K562 (cell line): ENCODE measurements at regions of chr3 and their contacts with region 1.

Region 1: DNA sequence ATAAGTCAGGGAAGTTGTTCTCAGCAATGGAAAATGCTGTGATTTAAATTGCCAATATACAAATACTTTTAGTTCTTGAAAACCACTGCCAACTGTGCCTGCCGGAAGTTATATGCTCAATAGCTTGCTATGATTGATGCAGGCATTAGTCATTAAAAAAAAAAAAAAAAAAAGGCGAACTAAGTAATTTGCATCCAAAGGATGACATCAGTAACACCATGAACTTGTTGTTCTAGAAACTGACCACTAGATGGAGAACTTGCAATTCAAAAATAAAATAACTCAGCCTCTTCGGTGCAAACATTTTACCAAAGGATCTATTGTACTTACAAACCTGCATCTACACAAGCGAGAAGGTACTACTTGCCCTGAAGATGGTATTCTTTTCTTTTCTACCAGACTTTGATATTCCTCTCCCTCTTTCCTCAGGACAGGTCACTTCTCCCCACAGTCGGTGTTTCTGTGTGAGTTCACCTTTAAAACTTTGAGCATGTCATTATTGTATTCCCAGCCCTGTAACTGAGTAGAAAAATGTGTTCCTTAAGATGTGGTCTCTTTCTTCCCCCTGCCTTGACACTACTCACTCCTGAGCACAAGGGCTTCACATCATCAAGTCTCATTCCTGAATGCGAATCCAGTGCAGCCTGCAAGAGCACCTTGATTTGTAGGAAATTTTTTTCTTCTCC is 115.0 kb upstream of the VEPH1 start:
- DNase-seq: peak; percentile 57 to 70 (median 66)
- ATAC-seq: peak; percentile 78
- H3K4me3 ChIP-seq: no peak overlapping the region
- H3K27ac ChIP-seq: no peak overlapping the region
- H3K4me1 ChIP-seq: no peaks in the 10 kb centered on the region
- H3K27me3 ChIP-seq: peaks cover 0 to 6% of the 10 kb centered on the region in 2 experiments; a peak in 3 of 5 replicates
- CTCF ChIP-seq: peak; percentile 29 to 74 (median 60); a peak in 5 of 6 replicates
- EP300 ChIP-seq: no peak
- POLR2A ChIP-seq: no peak
- RAD21 ChIP-seq: peak; percentile 59 to 71

Region 2: DNA sequence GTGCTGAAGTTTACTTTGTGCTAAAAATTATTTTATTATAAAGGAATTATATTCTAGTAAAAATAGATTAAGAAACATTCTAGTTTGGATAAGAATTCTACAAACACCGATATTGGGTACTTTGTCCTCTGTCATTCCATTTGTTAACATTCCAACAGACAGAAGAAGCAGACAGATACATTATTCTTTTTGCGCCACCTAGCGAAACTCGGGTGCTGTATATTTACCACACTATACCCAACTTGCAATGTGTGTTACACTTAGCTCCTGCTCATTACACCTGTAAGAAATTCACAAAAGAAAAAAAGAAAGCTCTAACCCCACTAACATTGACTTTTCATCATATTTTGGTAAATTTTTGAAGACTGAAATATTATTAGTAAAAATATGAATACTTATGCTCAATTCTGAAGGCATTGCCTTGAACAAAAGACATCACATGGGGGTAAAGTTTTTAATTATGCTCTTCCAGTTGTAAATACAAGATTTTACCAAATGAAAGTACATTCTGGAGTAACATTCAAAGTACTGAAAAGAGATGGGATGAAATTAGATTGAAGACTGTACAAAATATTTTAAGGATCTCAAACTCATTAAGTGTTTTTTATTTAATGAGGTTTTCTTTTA is 816.3 kb after region 1 on chr3:
- CTCF ChIA-PET with region 1: interaction called, 6 read pairs
- POLR2A ChIA-PET with region 1: interaction called, 3 read pairs
- in situ Hi-C with region 1: no loop called
- intact Hi-C with region 1: loop called (anchors 5 kb)
- DNase-seq: peak; percentile 11 to 80 (median 24)
- ATAC-seq: peak; percentile 98
- H3K4me3 ChIP-seq: no peak overlapping the region
- H3K27ac ChIP-seq: no peak overlapping the region
- H3K4me1 ChIP-seq: no peaks in the 10 kb centered on the region
- H3K27me3 ChIP-seq: no peaks in the 10 kb centered on the region
- CTCF ChIP-seq: peak; percentile 55 to 85 (median 67)
- EP300 ChIP-seq: no peak
- POLR2A ChIP-seq: no peak
- RAD21 ChIP-seq: peak; percentile 87 to 91

Region 3: GRCh38 chr3:158532099-158532734 is 914.0 kb after region 1 on chr3:
- CTCF ChIA-PET with region 1: interaction called, 4 read pairs
- POLR2A ChIA-PET with region 1: no interaction called
- in situ Hi-C with region 1: no loop called
- intact Hi-C with region 1: loop called (anchors 2 kb)
- DNase-seq: peak; percentile 8 to 39 (median 16)
- ATAC-seq: no peak
- H3K4me3 ChIP-seq: no peak overlapping the region
- H3K27ac ChIP-seq: no peak overlapping the region
- H3K4me1 ChIP-seq: no peaks in the 10 kb centered on the region
- H3K27me3 ChIP-seq: no peaks in the 10 kb centered on the region
- CTCF ChIP-seq: peak in 2 of 3 experiments; percentile 33 to 65; a peak in 3 of 6 replicates
- EP300 ChIP-seq: no peak
- POLR2A ChIP-seq: no peak
- RAD21 ChIP-seq: peak; percentile 46 to 59